Activated B cell treated with CpG ODN at 0.5 μM for 24 hours (primary cell): ENCODE measurements at regions of chr12 and their contacts with region 1.

Region 1: GRCh38 chr12:48183091-48183875 is at the start of gene CCDC184:
- DNase-seq: peak; percentile 69
- ATAC-seq: peak; percentile 76
- H3K4me3 Mint-ChIP-seq: peak within 1 kb of the TSS; percentile 92
- H3K27ac Mint-ChIP-seq: peak within 1 kb of the TSS; percentile 60
- H3K4me1 Mint-ChIP-seq: peaks cover 32% of the 10 kb centered on the region
- H3K27me3 Mint-ChIP-seq: peaks cover 27% of the 10 kb centered on the region
- CTCF ChIP-seq: no peak
- total RNA-seq, gene CCDC184: 0.18 and 0.29 TPM in 2 replicates

Region 2: GRCh38 chr12:47828608-47829536 is 354.4 kb before region 1 on chr12:
- CTCF ChIA-PET with region 1: no interaction called
- POLR2A ChIA-PET with region 1: interaction called, 12 read pairs
- intact Hi-C with region 1: no loop called
- DNase-seq: no peak
- ATAC-seq: no peak
- H3K4me3 Mint-ChIP-seq: no peak overlapping the region
- H3K27ac Mint-ChIP-seq: no peak overlapping the region
- H3K4me1 Mint-ChIP-seq: peaks cover 54% of the 10 kb centered on the region
- H3K27me3 Mint-ChIP-seq: no peaks in the 10 kb centered on the region
- CTCF ChIP-seq: no peak

Region 3: GRCh38 chr12:48165094-48165981 is 17.9 kb before region 1 on chr12:
- CTCF ChIA-PET with region 1: interaction called, 10 read pairs
- POLR2A ChIA-PET with region 1: interaction called, 5 read pairs
- intact Hi-C with region 1: no loop called
- DNase-seq: no peak
- ATAC-seq: peak; percentile 73
- H3K4me3 Mint-ChIP-seq: no peak overlapping the region
- H3K27ac Mint-ChIP-seq: no peak overlapping the region
- H3K4me1 Mint-ChIP-seq: no peaks in the 10 kb centered on the region
- H3K27me3 Mint-ChIP-seq: peaks cover 12% of the 10 kb centered on the region
- CTCF ChIP-seq: peak; percentile 69

Region 4: DNA sequence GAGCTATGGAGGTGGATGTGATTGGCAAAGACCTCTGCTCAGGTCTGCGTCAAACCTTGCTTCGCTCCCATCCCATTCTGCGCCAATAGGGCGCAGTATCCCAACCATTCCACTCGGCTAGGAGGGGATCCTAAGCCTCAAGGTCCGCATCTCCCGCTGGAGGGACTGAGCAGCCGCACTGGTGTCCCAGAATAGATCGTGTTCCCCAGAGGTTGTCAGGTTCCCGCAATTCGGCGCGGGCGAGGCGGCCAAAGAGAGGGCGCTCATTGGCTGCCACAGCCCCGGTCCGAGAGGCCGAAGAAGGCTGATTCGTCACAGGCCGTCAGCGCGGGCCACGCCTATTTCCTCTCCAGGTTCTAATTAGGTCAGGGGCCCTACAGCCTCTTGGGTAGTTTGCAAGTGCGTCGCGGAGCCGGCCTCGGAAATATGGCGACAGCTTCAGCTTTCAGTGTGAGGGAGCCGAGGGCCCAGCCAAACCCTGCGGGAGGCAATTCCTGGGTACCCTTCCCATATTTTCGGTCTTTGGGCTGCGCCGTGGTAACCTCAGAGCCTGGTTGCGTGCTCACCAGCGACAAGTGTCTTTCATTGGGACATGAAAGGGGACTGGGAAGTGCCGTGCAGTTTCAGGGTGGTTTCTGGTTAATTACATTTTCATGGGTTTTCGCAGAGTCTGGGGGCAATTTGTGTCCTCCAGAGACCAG is 14.8 kb after region 1 on chr12:
- CTCF ChIA-PET with region 1: interaction called, 21 read pairs
- POLR2A ChIA-PET with region 1: interaction called, 32 read pairs
- intact Hi-C with region 1: loop called (anchors 1 kb)
- DNase-seq: peak; percentile 84
- ATAC-seq: peak; percentile 98
- H3K4me3 Mint-ChIP-seq: peak overlapping the region; percentile 96
- H3K27ac Mint-ChIP-seq: peak overlapping the region; percentile 99
- H3K4me1 Mint-ChIP-seq: peaks cover 26% of the 10 kb centered on the region
- H3K27me3 Mint-ChIP-seq: peaks cover 17% of the 10 kb centered on the region
- CTCF ChIP-seq: no peak

Region 5: GRCh38 chr12:48366131-48366530 is 182.8 kb after region 1 on chr12:
- CTCF ChIA-PET with region 1: no interaction called
- POLR2A ChIA-PET with region 1: no interaction called
- intact Hi-C with region 1: no loop called
- DNase-seq: no peak
- ATAC-seq: no peak
- H3K4me3 Mint-ChIP-seq: no peak overlapping the region
- H3K27ac Mint-ChIP-seq: no peak overlapping the region
- H3K4me1 Mint-ChIP-seq: no peaks in the 10 kb centered on the region
- H3K27me3 Mint-ChIP-seq: peaks cover 7% of the 10 kb centered on the region
- CTCF ChIP-seq: no peak